PC-3 (cell line): ENCODE measurements at regions of chr11 and their contacts with region 1.

Region 1: DNA sequence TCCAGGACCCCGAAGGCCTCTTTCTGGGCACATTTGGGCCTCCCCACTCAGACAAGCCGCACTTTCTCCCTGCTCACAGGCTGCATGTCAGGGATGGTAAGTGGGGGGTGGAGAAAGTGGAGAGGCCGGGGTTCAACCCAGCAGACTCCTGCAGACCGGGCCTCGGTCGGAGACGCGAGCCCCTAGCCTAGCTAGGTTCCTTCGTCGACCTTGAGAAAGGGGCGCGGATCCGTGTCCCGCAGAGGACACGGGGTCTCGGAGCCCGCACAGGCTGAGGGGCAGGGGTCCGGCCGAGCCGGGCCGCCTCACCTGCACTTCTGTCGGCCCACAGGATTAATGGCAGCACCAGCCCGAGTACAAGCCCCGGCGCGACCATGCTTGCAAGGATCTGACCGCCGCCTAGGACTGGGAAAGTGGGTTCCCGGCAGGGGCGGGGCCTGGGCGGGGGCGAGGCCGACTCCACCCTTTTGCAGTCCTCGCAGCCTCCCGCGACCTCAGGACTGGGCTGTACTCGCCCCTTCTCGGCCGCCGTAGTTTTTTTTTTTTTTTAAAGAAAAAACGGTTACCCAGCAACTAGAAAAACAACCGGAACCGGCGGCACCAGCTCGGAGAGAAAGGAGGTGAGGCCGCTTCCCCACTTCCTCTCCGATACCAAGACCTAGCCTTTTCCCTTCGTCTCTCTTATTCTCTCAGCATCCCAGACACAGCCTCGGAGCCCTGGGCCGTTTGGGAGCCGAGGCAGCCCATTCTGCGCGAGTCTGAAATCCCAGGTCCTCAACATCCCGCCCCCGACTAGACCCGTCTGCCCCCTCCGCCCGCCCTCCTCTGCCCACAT is at the starts of genes SIAE and SPA17:
- DNase-seq: peak; percentile 94
- ATAC-seq: peak; percentile 94
- H3K4me3 ChIP-seq: peak within 1 kb of the TSS; percentile 91
- H3K27ac ChIP-seq: peak within 1 kb of the TSS; percentile 46
- H3K4me1 ChIP-seq: peaks cover 16% of the 10 kb centered on the region
- H3K27me3 ChIP-seq: no peaks in the 10 kb centered on the region
- CTCF ChIP-seq: no peak
- total RNA-seq, gene SIAE: 12.8 and 17.6 TPM in 2 replicates
- total RNA-seq, gene SPA17: 14.0 and 16.5 TPM in 2 replicates

Region 2: GRCh38 chr11:124633355-124633754 is 40.2 kb before region 1 on chr11:
- CTCF ChIA-PET with region 1: no interaction called
- POLR2A ChIA-PET with region 1: no interaction called
- intact Hi-C with region 1: no loop called
- DNase-seq: peak; percentile 52
- ATAC-seq: peak; percentile 97
- H3K4me3 ChIP-seq: no peak overlapping the region
- H3K27ac ChIP-seq: no peak overlapping the region
- H3K4me1 ChIP-seq: no peaks in the 10 kb centered on the region
- H3K27me3 ChIP-seq: no peaks in the 10 kb centered on the region
- CTCF ChIP-seq: peak; percentile 68

Region 3: GRCh38 chr11:124644426-124645280 is 28.9 kb before region 1 on chr11:
- CTCF ChIA-PET with region 1: interaction called, 3 read pairs
- POLR2A ChIA-PET with region 1: interaction called, 6 read pairs
- intact Hi-C with region 1: loop called (anchors 1 kb)
- DNase-seq: peak; percentile 72
- ATAC-seq: peak; percentile 93
- H3K4me3 ChIP-seq: peak overlapping the region; percentile 57
- H3K27ac ChIP-seq: no peak overlapping the region
- H3K4me1 ChIP-seq: peaks cover 9% of the 10 kb centered on the region; the same call in 1 of the 2 replicates
- H3K27me3 ChIP-seq: no peaks in the 10 kb centered on the region
- CTCF ChIP-seq: peak; percentile 97

Region 4: DNA sequence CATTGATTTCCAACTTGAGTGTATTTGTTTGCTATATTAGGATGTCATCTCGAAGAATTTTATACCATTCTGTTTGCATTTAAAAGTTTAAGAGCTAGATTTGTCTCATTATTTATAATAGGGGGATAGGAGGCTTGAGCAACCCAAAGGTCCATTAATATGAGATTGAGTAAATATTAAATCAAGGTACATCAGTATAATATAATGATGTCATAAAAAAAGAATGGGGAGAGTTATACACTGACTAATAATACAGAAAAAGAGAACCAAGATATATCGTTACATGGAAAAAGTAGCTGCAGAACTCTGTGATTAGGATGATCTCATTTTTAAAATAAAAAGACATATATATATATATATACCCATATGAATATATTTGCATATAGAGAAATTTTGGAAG is 19.6 kb after region 1 on chr11:
- CTCF ChIA-PET with region 1: no interaction called
- POLR2A ChIA-PET with region 1: no interaction called
- intact Hi-C with region 1: no loop called
- DNase-seq: no peak
- ATAC-seq: peak; percentile 50; the same call in 1 of the 2 replicates
- H3K4me3 ChIP-seq: no peak overlapping the region
- H3K27ac ChIP-seq: no peak overlapping the region
- H3K4me1 ChIP-seq: no peaks in the 10 kb centered on the region
- H3K27me3 ChIP-seq: no peaks in the 10 kb centered on the region
- CTCF ChIP-seq: no peak

Region 5: DNA sequence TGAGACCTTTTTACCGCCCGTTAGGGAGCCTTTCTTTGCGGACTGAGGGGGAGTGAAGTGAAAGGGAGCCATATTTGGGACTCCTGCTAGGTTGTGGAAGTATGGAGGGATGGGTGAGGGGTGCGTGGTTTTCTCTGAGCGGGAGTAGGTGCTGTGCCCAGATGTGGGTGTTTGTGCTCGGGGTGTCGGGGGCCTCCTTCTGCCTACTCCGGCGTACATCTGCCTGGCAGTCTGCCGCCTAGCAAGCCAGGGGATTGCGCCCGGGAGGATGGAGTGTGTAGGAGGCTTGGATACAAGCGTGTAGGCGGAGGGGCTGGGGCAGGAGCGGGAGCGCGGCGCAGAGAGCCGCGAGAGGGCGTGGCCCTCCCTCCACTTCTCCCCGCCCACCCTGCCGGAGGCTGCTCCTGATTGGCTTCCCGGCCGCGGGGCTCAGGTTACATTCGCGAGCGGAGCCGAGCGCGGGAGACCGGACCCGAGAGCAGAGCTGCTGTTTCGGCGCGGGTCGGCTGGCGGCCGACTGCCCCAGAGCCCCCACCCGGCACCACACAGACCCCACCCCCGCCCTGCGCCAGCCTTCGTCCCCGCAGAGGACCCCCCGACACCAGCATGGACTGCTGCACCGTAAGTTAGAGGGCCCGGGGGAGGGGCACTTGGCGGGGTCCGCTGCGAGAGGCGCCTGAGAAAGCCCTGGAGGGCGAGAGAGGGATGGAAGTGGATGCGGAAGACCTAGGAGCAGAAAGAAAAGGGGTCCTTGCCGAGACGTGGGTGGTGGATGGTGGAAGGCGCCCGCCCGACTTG is 66.1 kb after region 1 on chr11 and contains the start of gene NRGN:
- CTCF ChIA-PET with region 1: interaction called, 5 read pairs
- POLR2A ChIA-PET with region 1: interaction called, 16 read pairs
- intact Hi-C with region 1: loop called (anchors 1 kb)
- DNase-seq: peak; percentile 97
- ATAC-seq: peak; percentile 93
- H3K4me3 ChIP-seq: peak within 1 kb of the TSS; percentile 85
- H3K27ac ChIP-seq: no peak within 1 kb of the TSS
- H3K4me1 ChIP-seq: peaks cover 18% of the 10 kb centered on the region
- H3K27me3 ChIP-seq: no peaks in the 10 kb centered on the region
- CTCF ChIP-seq: no peak
- total RNA-seq, gene NRGN: 15.5 and 20.3 TPM in 2 replicates

Region 6: GRCh38 chr11:124754309-124754708 is 80.8 kb after region 1 on chr11:
- CTCF ChIA-PET with region 1: interaction called, 8 read pairs
- POLR2A ChIA-PET with region 1: interaction called, 10 read pairs
- intact Hi-C with region 1: no loop called
- DNase-seq: peak; percentile 51
- ATAC-seq: peak; percentile 73
- H3K4me3 ChIP-seq: no peak overlapping the region
- H3K27ac ChIP-seq: no peak overlapping the region
- H3K4me1 ChIP-seq: peaks cover 35% of the 10 kb centered on the region
- H3K27me3 ChIP-seq: no peaks in the 10 kb centered on the region
- CTCF ChIP-seq: no peak

Region 7: DNA sequence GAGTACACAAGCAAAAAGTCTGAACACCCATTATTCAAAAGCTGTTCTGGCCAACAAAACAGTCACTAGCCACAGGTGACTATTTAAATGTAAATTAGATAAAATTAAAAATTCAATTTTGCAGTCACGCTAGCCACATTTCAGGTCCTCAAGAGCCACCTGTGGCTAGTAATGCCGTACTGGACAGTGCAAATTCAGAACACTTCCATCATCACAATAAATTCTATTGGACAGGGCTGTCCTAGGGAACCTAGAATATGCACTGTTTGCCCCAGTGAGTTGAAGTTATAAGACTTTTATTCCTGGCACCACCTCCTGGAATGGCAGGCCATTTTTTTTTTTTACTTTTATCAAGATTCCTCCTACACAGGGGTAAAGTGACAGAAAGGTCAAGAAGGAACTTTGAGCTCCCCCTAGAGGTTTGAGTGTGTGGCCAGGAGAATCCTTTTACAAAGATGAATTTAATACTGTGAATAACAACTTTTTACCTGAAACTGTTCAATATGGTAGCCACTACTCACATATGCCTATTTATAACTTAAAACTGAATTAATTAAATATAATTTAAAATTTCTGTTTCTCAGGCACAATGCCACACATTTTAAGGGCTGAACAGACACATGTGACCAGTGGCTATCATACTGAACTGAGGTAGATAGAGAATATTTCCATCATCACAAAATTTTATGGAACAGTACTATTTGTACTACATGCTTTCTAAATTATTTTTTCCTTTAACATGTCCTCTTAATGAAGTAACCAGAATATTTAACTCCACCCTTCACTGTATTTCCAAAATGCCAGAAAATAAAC is 120.1 kb after region 1 on chr11:
- CTCF ChIA-PET with region 1: interaction called, 6 read pairs
- POLR2A ChIA-PET with region 1: no interaction called
- intact Hi-C with region 1: loop called (anchors 1 kb)
- DNase-seq: peak; percentile 82
- ATAC-seq: peak; percentile 65
- H3K4me3 ChIP-seq: no peak overlapping the region
- H3K27ac ChIP-seq: no peak overlapping the region
- H3K4me1 ChIP-seq: peaks cover 42% of the 10 kb centered on the region
- H3K27me3 ChIP-seq: no peaks in the 10 kb centered on the region
- CTCF ChIP-seq: peak; percentile 88

Region 8: DNA sequence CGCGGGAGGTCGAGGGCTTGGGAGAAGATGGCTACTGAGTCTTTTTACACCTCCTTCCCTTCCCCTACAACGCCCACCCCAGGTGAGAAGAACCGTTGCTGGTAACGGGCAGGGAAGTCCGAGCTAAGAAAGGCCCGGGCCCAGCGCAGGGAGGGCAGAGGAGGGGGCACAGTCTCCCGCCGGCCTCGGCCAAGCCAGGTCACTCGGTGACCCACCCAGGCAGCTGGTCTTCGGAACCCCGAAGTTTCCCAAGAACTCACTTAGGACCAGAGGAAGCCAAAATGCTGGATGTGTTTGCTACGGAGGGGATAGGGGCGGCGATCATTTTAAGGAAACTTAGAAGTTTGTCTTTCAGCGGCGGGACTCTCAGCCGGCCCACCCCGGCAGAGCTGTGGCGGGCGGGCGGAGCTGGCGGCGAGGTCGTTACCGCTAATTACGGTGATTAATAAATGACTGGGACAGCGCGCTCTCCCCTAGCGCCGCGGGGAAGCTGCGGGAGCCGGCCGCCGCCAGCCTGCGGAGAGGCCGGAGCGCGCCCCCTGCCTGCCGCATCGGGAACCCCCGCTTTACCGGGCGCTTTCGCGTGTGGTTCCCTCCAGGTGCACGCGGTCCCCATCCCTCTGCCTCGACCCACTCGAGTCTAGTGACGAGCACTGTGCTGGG is 192.5 kb after region 1 on chr11:
- CTCF ChIA-PET with region 1: interaction called, 5 read pairs
- POLR2A ChIA-PET with region 1: no interaction called
- intact Hi-C with region 1: loop called (anchors 1 kb)
- DNase-seq: peak; percentile 30
- ATAC-seq: peak; percentile 17
- H3K4me3 ChIP-seq: peak overlapping the region; percentile 18; the same call in 1 of the 2 replicates
- H3K27ac ChIP-seq: no peak overlapping the region
- H3K4me1 ChIP-seq: no peaks in the 10 kb centered on the region
- H3K27me3 ChIP-seq: peaks cover 72% of the 10 kb centered on the region
- CTCF ChIP-seq: peak; percentile 74